ENCODE measurements at regions of chr12 and their contacts with region 1.

Region 1: DNA sequence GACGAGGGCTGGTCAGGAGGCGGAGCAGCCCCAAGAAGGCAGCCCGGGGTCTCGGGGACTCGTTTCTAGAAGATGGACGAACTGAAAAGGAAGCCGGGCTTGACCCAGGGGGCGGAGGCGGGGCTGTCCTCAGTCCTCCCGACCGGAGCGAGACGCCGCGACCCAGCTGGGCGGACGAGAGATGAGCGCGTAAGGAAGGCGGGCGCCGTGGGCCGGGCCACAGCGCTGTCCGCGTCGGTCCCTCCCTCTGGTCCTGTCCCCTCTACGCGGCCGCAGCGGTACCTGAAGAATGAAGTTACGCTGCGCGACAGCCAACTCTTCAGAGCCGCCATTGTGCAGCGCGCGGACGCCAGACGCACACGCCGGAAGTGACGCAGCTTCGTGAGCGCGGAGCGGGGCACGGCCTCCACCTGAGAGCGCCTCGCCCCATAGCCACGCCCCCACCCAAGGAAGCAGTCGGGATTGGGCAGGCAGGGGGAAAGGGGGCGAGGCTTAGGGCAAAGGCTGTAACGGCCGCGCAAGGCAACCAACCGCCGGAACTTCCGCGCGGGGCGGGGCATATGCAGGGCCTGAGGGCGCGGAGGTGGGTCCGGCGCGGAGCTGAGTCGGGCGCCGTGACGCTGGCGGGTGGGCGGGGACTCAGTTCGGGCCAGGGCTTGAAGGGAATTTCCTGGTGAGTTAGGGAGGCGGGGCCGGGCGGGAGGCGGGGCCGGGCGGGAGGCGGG is at the start of gene DIABLO:
- DNase-seq: peak; percentile 100

Region 2: GRCh38 chr12:122265931-122266771 is 40.3 kb after region 1 on chr12 and contains the start of gene VPS33A:
- intact Hi-C with region 1: loop called (anchors 1 kb)
- DNase-seq: peak; percentile 93 to 99 (median 96)

Measured in posterior cingulate gyrus (tissue), 11 donors.